PC-9 (cell line): ENCODE measurements at regions of chr12 and their contacts with region 1.

Region 1: DNA sequence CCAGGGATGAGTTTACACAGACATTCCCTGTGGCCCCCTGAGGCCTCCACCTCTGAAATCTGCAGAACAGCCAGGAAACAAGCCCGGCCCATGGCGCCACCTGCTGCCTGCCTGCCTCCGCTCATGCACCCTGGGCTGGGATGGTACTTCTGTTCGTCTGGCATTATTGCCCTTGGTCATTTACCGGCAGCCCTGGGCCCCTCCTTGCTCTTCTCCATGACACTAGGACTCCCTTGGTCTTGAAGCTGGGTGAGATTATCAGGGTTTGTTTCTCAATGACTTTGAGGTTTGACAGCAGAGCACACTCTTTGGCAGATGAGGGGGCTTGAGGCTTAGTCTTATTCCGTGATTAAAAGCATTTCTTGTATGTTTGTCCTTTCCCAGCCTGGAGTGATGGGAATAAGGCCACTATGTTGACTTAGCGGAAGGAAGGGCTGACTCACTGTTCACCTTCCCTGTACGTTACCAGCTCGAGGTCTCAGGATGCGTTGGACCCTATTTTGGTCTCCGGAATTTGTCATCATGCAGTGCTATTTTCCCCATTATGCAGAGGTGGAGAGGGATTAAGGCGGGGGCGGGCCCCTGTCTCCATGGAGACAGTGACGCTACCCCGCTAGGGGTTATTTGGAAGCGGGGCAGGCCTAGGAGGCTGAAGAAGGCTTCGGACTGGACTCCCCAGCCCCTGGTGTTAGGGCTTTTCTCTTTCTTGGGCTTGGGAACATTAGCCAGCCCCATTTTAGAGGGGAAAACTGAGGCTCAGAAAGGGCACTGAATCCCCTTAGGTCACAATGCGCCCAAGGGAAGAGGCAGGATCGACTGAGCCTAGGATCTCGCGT is 706 bp upstream of the PEX5 start:
- DNase-seq: peak; percentile 64 to 86
- H3K4me3 ChIP-seq: peak overlapping the region; percentile 73
- H3K27ac ChIP-seq: peak overlapping the region; percentile 48
- H3K4me1 ChIP-seq: peaks cover 23% of the 10 kb centered on the region
- H3K27me3 ChIP-seq: no peaks in the 10 kb centered on the region; the same call in 1 of the 2 replicates
- CTCF ChIP-seq: peak; percentile 81

Region 2: DNA sequence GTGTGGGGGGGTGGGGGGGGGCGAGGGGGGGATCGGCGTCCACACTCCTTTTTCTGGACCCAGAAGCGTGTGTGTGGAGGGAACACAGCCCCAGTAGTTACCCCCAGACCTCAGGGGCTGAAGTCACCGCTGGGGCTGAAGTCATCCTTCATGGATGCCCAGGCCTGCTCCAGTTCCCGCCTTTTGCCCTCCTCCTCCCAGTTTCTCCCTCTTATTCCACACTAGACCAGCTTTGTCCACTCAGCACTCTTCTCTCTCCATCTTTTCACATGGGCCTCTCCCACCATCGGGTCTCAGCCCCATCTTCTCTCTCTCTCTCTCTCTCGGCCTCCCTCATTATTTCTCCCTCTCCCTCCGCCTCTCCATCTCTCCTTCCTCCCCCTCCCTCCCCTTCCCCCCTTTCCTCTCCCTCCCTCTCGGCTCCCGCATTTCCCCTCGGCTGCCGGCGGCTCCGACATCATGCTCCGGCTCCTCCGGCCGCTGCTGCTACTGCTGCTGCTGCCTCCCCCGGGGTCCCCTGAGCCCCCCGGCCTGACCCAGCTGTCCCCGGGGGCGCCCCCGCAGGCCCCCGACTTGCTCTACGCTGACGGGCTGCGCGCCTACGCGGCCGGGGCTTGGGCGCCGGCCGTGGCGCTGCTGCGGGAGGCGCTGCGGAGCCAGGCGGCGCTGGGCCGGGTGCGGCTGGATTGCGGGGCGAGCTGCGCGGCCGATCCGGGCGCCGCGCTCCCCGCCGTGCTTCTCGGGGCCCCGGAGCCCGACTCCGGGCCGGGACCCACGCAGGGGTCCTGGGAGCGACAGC is 360.6 kb before region 1 on chr12 and contains the start of gene P3H3:
- CTCF ChIA-PET with region 1: no interaction called
- POLR2A ChIA-PET with region 1: no interaction called
- intact Hi-C with region 1: no loop called
- DNase-seq: no peak
- H3K4me3 ChIP-seq: peak within 1 kb of the TSS; percentile 13; the same call in 1 of the 2 replicates
- H3K27ac ChIP-seq: no peak within 1 kb of the TSS
- H3K4me1 ChIP-seq: no peaks in the 10 kb centered on the region
- H3K27me3 ChIP-seq: peaks cover 90% of the 10 kb centered on the region
- CTCF ChIP-seq: no peak
- total RNA-seq, gene P3H3: 0.45 and 0.52 TPM in 2 replicates

Region 3: DNA sequence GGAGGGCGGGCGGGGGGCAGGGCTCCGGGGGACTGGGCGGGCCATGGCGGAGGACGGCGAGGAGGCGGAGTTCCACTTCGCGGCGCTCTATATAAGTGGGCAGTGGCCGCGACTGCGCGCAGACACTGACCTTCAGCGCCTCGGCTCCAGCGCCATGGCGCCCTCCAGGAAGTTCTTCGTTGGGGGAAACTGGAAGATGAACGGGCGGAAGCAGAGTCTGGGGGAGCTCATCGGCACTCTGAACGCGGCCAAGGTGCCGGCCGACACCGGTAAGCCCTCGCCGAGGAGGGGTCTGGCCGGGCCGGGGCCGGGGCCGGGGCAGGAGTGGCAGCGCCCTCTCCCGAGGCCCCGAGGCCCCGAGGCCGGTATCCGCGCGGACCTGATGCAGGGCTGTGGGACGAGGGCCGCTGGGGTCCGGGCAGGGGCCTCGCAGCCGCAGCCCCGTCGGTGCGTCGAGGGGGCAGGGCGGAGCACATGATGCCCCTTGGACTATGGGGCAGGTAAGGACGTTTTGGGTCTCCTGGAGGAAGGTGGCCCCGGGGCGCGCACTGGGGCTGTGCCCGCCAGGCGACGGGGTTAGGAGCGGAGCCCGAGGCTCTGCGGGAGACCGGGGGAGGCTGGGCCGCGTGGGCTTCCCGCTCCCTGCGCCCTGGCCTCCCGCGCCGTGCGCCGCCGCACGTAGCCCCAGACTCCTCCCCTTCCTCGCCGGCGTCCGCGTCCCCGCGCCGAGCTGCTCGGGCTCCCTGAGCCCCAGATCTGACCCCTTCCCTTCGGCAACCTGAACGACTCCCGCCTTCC is 321.2 kb before region 1 on chr12 and contains the start of gene TPI1:
- CTCF ChIA-PET with region 1: no interaction called
- POLR2A ChIA-PET with region 1: no interaction called
- intact Hi-C with region 1: loop called (anchors 1 kb)
- DNase-seq: peak; percentile 46 to 82
- H3K4me3 ChIP-seq: peak within 1 kb of the TSS; percentile 97
- H3K27ac ChIP-seq: peak within 1 kb of the TSS; percentile 72
- H3K4me1 ChIP-seq: peaks cover 32% of the 10 kb centered on the region
- H3K27me3 ChIP-seq: no peaks in the 10 kb centered on the region
- CTCF ChIP-seq: no peak; the same call in 1 of the 2 replicates
- total RNA-seq, gene TPI1: 1,080 and 1,199 TPM in 2 replicates

Region 4: GRCh38 chr12:6884539-6884938 is 304.2 kb before region 1 on chr12:
- CTCF ChIA-PET with region 1: no interaction called
- POLR2A ChIA-PET with region 1: interaction called, 25 read pairs
- intact Hi-C with region 1: no loop called
- DNase-seq: no peak
- H3K4me3 ChIP-seq: no peak overlapping the region
- H3K27ac ChIP-seq: no peak overlapping the region
- H3K4me1 ChIP-seq: 0 out of 2 replicates have a peak, but pooled peaks cover 5% of the 10 kb centered on the region
- H3K27me3 ChIP-seq: no peaks in the 10 kb centered on the region
- CTCF ChIP-seq: no peak

Region 5: DNA sequence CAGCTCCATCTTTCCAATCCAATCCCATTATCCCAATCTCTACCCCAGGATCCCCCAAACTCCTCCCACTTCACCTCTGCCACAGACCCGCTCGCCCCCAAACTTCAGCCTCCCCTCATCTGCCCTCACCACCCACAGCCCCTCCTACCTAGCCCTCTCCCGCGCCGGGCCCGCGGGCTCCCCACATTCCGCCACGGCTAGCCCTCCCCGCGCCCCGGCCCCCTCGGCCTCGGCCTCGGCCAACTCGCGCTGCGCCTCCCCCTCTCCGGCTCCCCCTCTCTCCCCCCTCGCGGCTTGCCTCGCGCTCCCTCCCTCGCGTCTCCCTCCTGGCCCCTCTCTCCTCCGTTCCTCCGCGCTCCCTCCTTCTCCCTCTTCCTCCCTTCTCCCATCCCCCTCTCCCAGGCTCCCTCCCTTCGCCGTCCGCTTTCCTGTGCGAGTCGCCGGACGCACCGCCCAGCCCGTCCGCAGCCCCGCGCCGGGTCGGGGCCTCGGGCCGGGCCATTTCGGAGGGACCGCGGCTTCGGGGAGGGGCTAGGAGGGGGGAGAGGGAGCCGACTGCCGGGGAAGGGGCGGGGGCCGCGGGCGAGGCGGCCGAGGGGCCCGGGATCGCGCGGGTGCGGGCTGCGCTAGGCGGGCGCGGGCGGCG is 261.3 kb before region 1 on chr12 and contains the start of gene ATN1:
- CTCF ChIA-PET with region 1: interaction called, 3 read pairs
- POLR2A ChIA-PET with region 1: no interaction called
- intact Hi-C with region 1: loop called (anchors 5 kb)
- DNase-seq: peak in 1 of 2 experiments; percentile 66
- H3K4me3 ChIP-seq: peak within 1 kb of the TSS; percentile 85
- H3K27ac ChIP-seq: peak within 1 kb of the TSS; percentile 75
- H3K4me1 ChIP-seq: peaks cover 53% of the 10 kb centered on the region
- H3K27me3 ChIP-seq: no peaks in the 10 kb centered on the region
- CTCF ChIP-seq: no peak
- total RNA-seq, gene ATN1: 158 and 159 TPM in 2 replicates

Region 6: DNA sequence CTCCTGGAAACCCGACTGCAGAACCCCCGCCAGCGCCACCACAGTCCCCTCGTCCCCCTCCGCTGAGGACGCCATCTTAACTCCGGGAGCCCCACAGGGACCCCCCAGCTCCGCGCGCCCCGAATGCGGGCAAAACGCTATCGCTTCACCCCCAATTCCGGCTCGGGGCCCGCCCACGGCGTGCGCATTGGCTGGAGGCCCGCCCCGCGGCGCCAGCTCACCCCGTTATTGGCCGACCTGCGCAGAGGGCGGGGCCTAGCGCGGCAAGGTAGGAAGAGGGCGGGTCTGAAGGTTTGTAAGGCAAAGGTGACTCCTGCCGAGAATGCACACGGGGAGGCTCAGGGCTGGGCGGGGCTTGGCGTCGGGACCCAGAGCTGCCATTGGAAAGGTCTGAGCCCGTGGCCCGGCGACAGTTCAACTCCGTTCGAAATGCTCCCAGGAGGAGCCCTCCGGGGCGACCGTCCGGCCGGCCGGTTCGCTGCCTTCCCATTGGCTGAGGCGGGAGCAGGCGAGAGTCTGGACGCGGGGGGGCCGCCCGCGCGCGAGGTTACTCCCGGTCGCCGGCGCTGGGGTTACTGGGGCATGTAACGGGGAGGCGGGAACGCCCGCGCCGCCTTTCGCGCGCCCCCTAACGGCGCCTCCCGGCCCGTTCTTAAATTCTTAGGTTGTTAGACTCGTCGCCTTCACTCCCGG is 170.3 kb before region 1 on chr12 and contains the start of gene LPCAT3:
- CTCF ChIA-PET with region 1: no interaction called
- POLR2A ChIA-PET with region 1: no interaction called
- intact Hi-C with region 1: loop called (anchors 2 kb)
- DNase-seq: peak; percentile 96 to 100
- H3K4me3 ChIP-seq: peak within 1 kb of the TSS; percentile 79
- H3K27ac ChIP-seq: peak within 1 kb of the TSS; percentile 74
- H3K4me1 ChIP-seq: peaks cover 37% of the 10 kb centered on the region
- H3K27me3 ChIP-seq: no peaks in the 10 kb centered on the region
- CTCF ChIP-seq: peak; percentile 83
- total RNA-seq, gene LPCAT3: 53.8 and 102 TPM in 2 replicates

Region 7: DNA sequence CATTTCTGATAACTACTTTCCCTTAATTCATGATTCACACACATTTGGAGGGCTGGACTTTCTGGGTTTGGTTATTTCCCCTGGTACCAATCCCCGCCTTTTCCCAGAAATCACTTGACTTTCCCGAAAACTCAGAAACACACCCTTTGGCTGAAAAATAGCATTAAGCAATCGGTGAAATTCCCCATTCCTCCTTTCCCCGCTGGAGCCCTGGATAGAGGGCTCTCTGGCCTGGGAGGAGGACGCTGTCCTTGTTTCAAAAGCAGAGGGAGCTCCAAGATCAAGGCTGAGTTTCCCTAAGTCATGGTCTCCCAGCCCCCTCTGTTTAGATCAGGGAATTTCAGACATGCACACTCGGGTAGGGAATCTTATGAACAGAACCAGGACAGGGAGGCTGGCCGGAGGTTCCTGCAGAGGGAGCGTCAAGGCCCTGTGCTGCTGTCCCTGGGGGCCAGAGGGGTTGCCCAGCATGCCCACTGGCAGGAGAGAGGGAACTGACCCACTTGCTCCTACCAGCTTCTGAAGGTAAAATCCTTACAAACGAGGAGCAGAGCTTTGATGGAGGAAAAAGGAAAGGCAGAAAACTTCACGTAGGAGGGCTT is 128.3 kb before region 1 on chr12 and contains the start of gene C1S:
- CTCF ChIA-PET with region 1: no interaction called
- POLR2A ChIA-PET with region 1: no interaction called
- intact Hi-C with region 1: loop called (anchors 2 kb)
- DNase-seq: peak; percentile 68 to 69
- H3K4me3 ChIP-seq: no peak within 1 kb of the TSS
- H3K27ac ChIP-seq: no peak within 1 kb of the TSS
- H3K4me1 ChIP-seq: peaks cover 16% of the 10 kb centered on the region; the same call in 1 of the 2 replicates
- H3K27me3 ChIP-seq: peaks cover 2% of the 10 kb centered on the region; the same call in 1 of the 2 replicates
- CTCF ChIP-seq: peak; percentile 73
- total RNA-seq, gene C1S: 32.4 and 32.9 TPM in 2 replicates

Region 8: DNA sequence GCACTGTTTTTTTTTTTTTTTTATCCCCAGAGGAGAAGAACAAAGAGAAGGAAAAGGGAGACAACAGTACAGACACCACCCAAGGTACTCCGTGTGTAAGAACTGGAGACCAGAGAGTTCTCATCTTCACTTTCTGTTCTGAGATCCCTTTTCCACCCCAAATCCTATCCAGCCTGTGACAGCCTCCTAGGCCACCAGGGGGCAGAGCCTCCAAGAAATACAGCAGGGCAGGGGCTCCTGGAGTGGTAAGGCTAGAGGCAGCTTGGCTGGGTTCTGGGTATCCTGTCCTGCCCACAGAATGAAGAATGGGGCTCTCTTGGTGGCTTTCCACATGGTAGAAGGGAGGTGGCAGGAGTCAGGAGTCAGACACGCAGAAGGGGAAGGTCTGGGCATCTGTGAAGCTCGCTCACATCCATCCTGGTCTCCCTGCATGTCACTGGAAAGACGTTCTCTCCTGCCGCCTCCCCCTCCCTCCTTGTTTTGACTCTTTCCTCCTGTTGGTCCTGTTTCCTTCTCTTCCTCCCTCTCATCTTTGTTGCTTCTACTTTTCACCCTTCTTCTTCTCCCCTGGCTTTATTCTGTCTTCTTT is 46.6 kb before region 1 on chr12:
- CTCF ChIA-PET with region 1: no interaction called
- POLR2A ChIA-PET with region 1: no interaction called
- intact Hi-C with region 1: loop called (anchors 1 kb)
- DNase-seq: peak; percentile 52 to 61
- H3K4me3 ChIP-seq: no peak overlapping the region
- H3K27ac ChIP-seq: no peak overlapping the region
- H3K4me1 ChIP-seq: no peaks in the 10 kb centered on the region
- H3K27me3 ChIP-seq: no peaks in the 10 kb centered on the region
- CTCF ChIP-seq: peak; percentile 91

Region 9: DNA sequence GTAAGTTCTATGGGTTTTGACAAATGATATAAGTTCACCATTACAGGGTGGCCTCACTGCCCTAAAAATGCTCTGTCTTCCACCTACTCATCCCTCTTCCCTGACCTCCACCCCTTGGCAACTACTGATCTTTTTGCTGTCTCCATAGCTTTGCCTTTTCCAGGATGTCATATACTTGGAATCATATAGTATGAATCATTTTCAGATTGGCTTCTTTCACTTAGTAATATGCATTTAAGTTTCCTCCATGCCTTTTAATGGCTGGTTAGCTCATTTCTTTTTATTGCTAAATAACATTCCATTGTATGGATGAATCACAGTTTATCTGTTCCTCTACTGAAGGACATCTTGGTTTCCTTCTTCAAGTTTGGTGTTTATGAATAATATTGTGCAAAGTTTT is 13.3 kb before region 1 on chr12:
- CTCF ChIA-PET with region 1: no interaction called
- POLR2A ChIA-PET with region 1: no interaction called
- intact Hi-C with region 1: no loop called
- DNase-seq: peak in 1 of 2 experiments; percentile 50
- H3K4me3 ChIP-seq: no peak overlapping the region
- H3K27ac ChIP-seq: no peak overlapping the region
- H3K4me1 ChIP-seq: no peaks in the 10 kb centered on the region
- H3K27me3 ChIP-seq: 0 out of 2 replicates have a peak, but pooled peaks cover 4% of the 10 kb centered on the region
- CTCF ChIP-seq: no peak